Activated naive CD4-positive, alpha-beta T cell treated with anti-CD3 and anti-CD28 coated beads, Interleukin-2, amount 10 ng/mL, durations not matched to agents 7 days and 5 days (primary cell): ENCODE measurements at regions of chr17 and their contacts with region 1.

Region 1: GRCh38 chr17:3738562-3739295 is 15.0 kb downstream of the HASPIN start:
- DNase-seq: peak; percentile 72
- H3K4me3 Mint-ChIP-seq: no peak overlapping the region
- H3K27ac Mint-ChIP-seq: peak overlapping the region; percentile 31
- H3K4me1 Mint-ChIP-seq: peaks cover 42% of the 10 kb centered on the region
- H3K27me3 Mint-ChIP-seq: peaks cover 9% of the 10 kb centered on the region

Region 2: DNA sequence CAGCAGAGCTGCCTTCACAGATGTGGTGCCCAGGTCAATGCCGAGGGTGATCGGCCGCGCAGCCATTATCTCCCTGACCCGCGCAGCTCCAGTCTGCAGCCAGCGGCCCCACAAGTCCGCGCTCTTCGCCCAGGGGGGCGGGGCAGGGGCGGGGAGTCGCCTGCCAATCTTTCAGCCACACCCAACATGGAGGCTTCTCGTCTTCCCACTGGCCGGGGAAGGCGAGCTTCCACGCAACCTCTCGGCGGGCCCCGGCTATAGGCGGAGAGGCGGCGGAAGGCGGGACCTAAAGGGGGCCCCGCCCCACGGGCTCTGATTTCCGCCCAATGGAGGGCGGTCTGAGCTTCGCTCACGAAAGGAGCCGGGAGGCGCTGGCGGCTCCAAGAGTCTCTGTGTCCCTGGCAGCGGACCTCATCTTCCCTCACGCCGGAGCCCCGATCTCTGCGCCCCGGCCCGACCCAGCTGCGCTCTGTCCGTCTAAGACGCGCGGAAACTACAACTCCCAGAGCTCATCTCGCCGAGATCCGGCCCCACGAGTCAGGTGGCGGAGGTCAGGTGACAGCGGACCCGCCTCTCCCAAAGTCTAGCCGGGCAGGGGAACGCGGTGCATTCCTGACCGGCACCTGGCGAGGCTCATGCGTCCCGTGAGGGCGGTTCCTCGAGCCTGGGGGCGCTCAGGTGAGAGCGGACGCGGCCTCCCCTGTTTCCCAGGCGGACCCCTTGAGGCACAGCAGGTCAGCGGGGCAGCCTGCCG is 102.4 kb before region 1 on chr17 and contains the starts of genes CTNS and SHPK:
- CTCF ChIA-PET with region 1: no interaction called
- DNase-seq: peak; percentile 97
- H3K4me3 Mint-ChIP-seq: peak within 1 kb of the TSS; percentile 91
- H3K27ac Mint-ChIP-seq: peak within 1 kb of the TSS; percentile 95
- H3K4me1 Mint-ChIP-seq: peaks cover 51% of the 10 kb centered on the region
- H3K27me3 Mint-ChIP-seq: no peaks in the 10 kb centered on the region

Region 3: DNA sequence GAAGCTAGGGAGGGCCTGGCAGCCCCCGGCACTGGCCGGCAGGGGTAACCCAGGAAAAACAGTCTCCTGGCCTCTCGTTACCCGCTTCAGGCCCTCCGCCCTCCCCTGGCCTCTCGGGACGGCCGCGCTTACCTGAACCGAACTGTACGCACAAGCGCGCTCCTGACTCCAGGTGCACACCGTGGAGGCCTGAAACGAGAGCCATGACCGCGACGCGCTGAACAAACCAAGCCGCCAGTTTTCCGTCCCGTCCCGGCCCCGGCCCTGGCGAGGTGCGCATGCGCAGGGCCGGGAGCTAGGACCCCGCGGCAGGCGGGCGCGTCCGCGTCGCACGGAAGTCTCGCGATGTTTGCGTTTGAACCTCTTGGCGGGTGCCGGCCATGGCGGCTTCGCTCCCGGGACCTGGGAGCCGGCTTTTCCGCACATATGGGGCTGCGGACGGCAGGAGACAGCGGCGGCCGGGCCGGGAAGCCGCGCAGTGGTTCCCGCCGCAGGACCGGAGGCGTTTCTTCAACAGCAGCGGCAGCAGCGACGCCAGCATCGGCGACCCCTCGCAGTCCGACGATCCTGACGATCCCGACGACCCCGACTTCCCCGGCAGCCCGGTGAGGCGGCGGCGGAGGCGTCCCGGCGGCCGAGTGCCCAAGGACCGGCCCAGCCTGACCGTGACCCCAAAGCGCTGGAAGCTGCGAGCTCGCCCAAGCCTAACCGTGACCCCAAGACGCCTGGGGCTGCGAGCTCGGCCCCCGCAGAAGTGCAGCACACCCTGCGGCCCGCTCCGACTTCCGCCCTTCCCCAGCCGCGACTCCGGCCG is 15.0 kb before region 1 on chr17 and contains the start of gene HASPIN:
- CTCF ChIA-PET with region 1: interaction called, 25 read pairs
- DNase-seq: peak; percentile 94
- H3K4me3 Mint-ChIP-seq: peak within 1 kb of the TSS; percentile 88
- H3K27ac Mint-ChIP-seq: peak within 1 kb of the TSS; percentile 86
- H3K4me1 Mint-ChIP-seq: peaks cover 65% of the 10 kb centered on the region
- H3K27me3 Mint-ChIP-seq: no peaks in the 10 kb centered on the region

Region 4: DNA sequence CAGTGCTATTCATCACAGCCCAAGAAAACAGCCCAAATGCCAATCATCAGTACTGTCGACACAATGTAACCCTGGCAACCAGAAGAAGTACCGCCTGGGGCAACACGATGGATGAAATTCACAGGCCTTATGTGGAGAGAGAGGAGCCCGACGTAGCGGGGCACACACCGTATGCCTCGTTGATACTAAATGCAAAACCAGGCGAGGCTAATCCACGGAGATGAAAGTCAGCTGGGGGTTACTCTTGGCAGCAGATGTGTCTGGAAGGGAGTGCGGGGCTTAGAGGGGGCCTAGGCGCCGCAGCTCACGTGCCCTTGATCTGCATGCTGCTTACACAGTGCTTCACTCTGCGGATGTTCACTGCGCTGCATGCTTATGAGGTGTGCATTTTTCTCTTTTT is 32.4 kb after region 1 on chr17:
- CTCF ChIA-PET with region 1: interaction called, 17 read pairs
- DNase-seq: no peak
- H3K4me3 Mint-ChIP-seq: no peak overlapping the region
- H3K27ac Mint-ChIP-seq: no peak overlapping the region
- H3K4me1 Mint-ChIP-seq: peaks cover 43% of the 10 kb centered on the region
- H3K27me3 Mint-ChIP-seq: peaks cover 7% of the 10 kb centered on the region

Region 5: GRCh38 chr17:3804503-3804931 is 65.8 kb after region 1 on chr17:
- CTCF ChIA-PET with region 1: interaction called, 46 read pairs
- DNase-seq: no peak
- H3K4me3 Mint-ChIP-seq: no peak overlapping the region
- H3K27ac Mint-ChIP-seq: no peak overlapping the region
- H3K4me1 Mint-ChIP-seq: peaks cover 2% of the 10 kb centered on the region
- H3K27me3 Mint-ChIP-seq: no peaks in the 10 kb centered on the region

Region 6: DNA sequence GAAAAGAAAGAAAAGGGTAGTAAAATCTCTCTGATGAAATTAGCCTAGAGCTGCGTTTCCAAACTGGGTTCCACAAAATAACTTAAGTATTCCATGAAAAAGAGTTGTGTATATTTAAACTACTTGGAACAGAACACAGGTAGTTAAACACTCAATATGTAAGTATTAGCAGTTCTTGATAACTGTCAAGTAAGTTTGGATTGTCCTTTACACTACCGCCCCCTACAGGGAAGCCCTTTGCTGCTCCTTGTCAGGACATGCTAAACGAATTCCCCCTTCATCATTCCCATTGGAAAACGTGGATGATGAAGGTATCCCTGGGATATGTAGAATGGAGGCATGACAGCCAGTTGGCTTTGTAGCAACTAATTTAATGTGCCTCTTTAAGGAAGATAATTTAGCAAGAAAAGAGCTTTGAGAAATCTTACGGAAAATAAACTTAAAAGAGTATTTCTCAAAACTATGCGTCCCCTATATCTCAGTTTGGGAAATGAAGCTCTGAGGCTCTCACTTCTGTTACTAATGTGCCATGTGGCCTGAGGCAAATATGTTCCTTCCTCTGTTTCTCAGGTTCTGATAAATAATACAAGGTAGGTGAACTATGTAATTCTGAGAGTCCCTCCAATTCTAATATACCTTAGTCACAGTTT is 88.5 kb after region 1 on chr17:
- CTCF ChIA-PET with region 1: interaction called, 374 read pairs
- DNase-seq: peak; percentile 84
- H3K4me3 Mint-ChIP-seq: no peak overlapping the region
- H3K27ac Mint-ChIP-seq: no peak overlapping the region
- H3K4me1 Mint-ChIP-seq: peaks cover 2% of the 10 kb centered on the region
- H3K27me3 Mint-ChIP-seq: no peaks in the 10 kb centered on the region

Region 7: GRCh38 chr17:3845621-3846441 is 107.1 kb after region 1 on chr17 and contains the start of gene NCBP3:
- CTCF ChIA-PET with region 1: interaction called, 114 read pairs
- DNase-seq: peak; percentile 89
- H3K4me3 Mint-ChIP-seq: peak within 1 kb of the TSS; percentile 95
- H3K27ac Mint-ChIP-seq: peak within 1 kb of the TSS; percentile 91
- H3K4me1 Mint-ChIP-seq: peaks cover 26% of the 10 kb centered on the region
- H3K27me3 Mint-ChIP-seq: peaks cover 37% of the 10 kb centered on the region